ENCODE measurements at regions of chr15 and their contacts with region 1.

Region 1: DNA sequence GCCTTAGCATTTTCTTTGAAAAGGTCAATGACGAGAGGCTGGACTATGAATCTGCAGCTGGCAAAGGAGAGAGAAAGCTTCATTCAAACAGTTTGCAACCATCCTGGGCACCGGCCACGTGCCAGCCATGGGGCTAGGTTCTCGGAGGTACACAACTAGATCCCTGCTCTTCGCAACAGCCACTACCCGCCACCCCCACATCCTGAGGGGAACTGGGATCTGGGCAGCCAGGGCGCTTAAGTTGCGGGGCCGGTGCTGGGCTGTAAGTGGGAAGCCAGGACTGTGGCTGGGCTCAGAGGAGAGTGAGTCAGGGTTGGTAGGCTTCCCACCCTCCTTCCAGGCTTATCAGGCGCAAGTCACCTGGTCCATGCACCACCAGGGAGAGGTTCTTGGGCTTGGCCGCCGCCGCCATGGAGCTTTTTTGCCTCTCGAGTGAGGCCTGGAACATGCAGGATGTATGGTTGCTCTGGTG is 95.0 kb upstream of the TERB2 start:
- DNase-seq: no peak
- H3K4me3 ChIP-seq: no peak overlapping the region
- H3K27ac ChIP-seq: no peak overlapping the region
- H3K4me1 ChIP-seq: no peaks in the 10 kb centered on the region
- H3K27me3 ChIP-seq: no peaks in the 10 kb centered on the region
- CTCF ChIP-seq: no peak

Region 2: DNA sequence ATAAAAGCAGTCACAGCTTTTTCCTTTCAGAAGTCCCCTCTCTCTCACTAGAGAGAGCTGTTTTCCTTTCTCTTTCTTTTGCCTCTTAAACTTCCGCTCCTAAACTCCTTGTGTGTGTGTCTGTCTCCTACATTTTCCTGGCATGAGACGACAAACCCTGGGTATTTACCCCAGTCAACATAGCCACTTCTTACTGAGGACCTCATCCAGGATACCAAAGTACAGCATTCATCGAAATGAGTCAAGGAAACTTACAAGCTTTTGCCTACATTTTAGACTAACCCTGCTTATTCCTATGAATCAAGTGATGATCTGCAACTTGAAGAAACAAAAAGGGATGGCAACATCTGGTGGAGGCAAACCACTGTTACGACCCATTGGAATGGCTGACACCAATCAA is 167.1 kb before region 1 on chr15:
- CTCF ChIA-PET with region 1: no interaction called
- dilution Hi-C with region 1: no loop called
- in situ Hi-C with region 1: no loop called
- intact Hi-C with region 1: no loop called
- DNase-seq: no peak
- H3K4me3 ChIP-seq: no peak overlapping the region
- H3K27ac ChIP-seq: no peak overlapping the region
- H3K4me1 ChIP-seq: no peaks in the 10 kb centered on the region
- H3K27me3 ChIP-seq: peaks cover 3% of the 10 kb centered on the region
- CTCF ChIP-seq: no peak

Region 3: DNA sequence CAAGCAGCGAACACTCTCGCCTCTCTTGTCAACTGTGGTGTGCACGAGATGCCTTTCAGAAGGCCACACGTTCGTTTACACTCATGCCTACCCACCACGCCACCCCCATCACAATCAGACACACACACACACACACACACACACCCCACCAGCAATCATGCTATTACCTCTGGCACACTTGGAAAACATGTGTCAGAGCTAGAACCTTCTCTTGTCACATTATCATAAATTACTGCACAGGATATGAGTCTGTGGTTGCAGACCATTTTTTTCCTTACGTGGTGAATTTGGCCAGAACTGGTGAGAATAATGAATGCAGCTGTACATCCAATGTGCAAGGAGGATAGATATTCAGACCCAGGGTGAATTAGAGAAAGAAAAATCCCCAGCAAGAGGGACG is 72.7 kb before region 1 on chr15:
- CTCF ChIA-PET with region 1: no interaction called
- dilution Hi-C with region 1: loop called (anchors 5 kb)
- in situ Hi-C with region 1: no loop called
- intact Hi-C with region 1: no loop called
- DNase-seq: no peak
- H3K4me3 ChIP-seq: no peak overlapping the region
- H3K27ac ChIP-seq: no peak overlapping the region
- H3K4me1 ChIP-seq: peaks cover 3% of the 10 kb centered on the region
- H3K27me3 ChIP-seq: no peaks in the 10 kb centered on the region
- CTCF ChIP-seq: no peak

Region 4: DNA sequence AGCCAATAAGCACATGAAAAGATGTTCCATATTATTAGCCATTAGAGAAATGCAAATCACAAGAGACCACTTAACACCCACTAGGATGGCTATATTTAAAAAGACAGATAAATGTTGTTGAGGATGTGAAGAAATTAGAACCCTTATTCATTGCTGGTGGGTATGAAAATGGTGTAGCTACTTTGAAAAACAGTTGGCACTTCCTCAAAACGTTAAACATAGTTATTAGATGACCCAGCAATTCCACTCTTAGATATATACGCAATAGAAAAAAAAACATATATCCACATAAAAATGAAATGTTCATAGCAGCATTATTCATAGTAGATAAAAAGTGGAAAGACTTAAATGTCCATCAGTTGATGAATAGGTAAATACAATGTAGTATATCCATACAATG is 47.9 kb after region 1 on chr15:
- CTCF ChIA-PET with region 1: no interaction called
- dilution Hi-C with region 1: no loop called
- in situ Hi-C with region 1: no loop called
- intact Hi-C with region 1: loop called (anchors 5 kb)
- DNase-seq: no peak
- H3K4me3 ChIP-seq: no peak overlapping the region
- H3K27ac ChIP-seq: no peak overlapping the region
- H3K4me1 ChIP-seq: no peaks in the 10 kb centered on the region
- H3K27me3 ChIP-seq: no peaks in the 10 kb centered on the region
- CTCF ChIP-seq: no peak

Region 5: DNA sequence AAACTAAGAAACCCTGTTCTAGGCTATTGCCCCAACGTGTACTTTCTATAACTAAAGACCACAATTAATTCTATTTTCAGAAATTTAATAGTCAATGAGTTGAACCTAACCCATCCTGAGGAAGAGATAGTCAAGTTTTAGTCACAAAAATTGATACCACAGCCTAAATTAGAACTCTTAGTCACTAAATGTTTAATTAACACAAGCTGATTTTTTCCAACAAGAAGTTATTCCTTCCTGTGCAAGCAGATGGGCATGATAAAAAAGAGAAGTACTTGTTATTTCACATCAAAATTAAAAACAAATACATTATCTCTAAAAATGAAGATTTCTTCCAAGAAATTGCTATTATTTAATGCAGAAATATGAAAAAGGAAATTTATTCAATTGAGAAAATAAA is 56.7 kb after region 1 on chr15:
- CTCF ChIA-PET with region 1: no interaction called
- dilution Hi-C with region 1: no loop called
- in situ Hi-C with region 1: loop called in 1 of 2 experiments (anchors 10 kb)
- intact Hi-C with region 1: no loop called
- DNase-seq: no peak
- H3K4me3 ChIP-seq: no peak overlapping the region
- H3K27ac ChIP-seq: no peak overlapping the region
- H3K4me1 ChIP-seq: no peaks in the 10 kb centered on the region
- H3K27me3 ChIP-seq: no peaks in the 10 kb centered on the region
- CTCF ChIP-seq: no peak

Region 6: GRCh38 chr15:44956388-44956787 is 94.9 kb after region 1 on chr15 and contains the start of gene TERB2:
- CTCF ChIA-PET with region 1: no interaction called
- dilution Hi-C with region 1: no loop called
- in situ Hi-C with region 1: no loop called
- intact Hi-C with region 1: no loop called
- DNase-seq: no peak
- H3K4me3 ChIP-seq: no peak within 1 kb of the TSS
- H3K27ac ChIP-seq: no peak within 1 kb of the TSS
- H3K4me1 ChIP-seq: no peaks in the 10 kb centered on the region
- H3K27me3 ChIP-seq: no peaks in the 10 kb centered on the region
- CTCF ChIP-seq: no peak
- total RNA-seq, gene TERB2: not detected